ENCODE measurements at regions of chr11 and their contacts with region 1.

Region 1: GRCh38 chr11:121194731-121195596 is 93.9 kb downstream of the TECTA start:
- DNase-seq: peak; percentile 31
- ATAC-seq: peak; percentile 99
- H3K4me3 ChIP-seq: no peak overlapping the region
- H3K27ac ChIP-seq: no peak overlapping the region
- H3K4me1 ChIP-seq: no peaks in the 10 kb centered on the region
- H3K27me3 ChIP-seq: no peaks in the 10 kb centered on the region
- CTCF ChIP-seq: peak; percentile 72 to 84 (median 83)
- EP300 ChIP-seq: no peak
- POLR2A ChIP-seq: no peak
- RAD21 ChIP-seq: peak; percentile 86

Region 2: DNA sequence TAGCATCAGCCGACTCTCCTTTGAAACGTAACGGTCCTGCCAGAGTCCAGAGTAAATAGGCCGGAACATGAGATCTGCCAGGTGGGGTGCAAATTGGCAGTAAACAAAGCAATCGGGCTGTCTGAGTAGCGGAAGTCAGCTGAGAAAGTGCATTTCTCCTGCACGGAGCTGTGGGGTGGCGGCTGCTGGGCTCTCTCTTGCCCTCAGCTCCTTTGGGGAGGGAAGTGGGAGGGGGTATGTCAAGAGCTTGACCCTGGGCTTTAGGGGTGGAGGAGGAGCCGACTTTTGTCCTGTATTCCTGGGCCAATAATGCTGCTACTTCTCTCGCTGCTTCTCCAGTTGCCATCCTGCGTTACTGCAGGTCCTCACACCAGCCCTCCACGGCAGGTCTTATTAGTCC is 671.8 kb before region 1 on chr11:
- CTCF ChIA-PET with region 1: interaction called, 3 read pairs
- POLR2A ChIA-PET with region 1: no interaction called
- RAD21 ChIA-PET with region 1: no interaction called
- SMC1A ChIA-PET with region 1: no interaction called
- in situ Hi-C with region 1: loop called (anchors 5 kb)
- intact Hi-C with region 1: no loop called
- DNase-seq: no peak
- ATAC-seq: peak; percentile 51
- H3K4me3 ChIP-seq: no peak overlapping the region
- H3K27ac ChIP-seq: no peak overlapping the region
- H3K4me1 ChIP-seq: no peaks in the 10 kb centered on the region
- H3K27me3 ChIP-seq: peaks cover 0 to 1% of the 10 kb centered on the region in 2 experiments; a peak in 2 of 4 replicates
- CTCF ChIP-seq: no peak
- EP300 ChIP-seq: no peak
- POLR2A ChIP-seq: no peak
- RAD21 ChIP-seq: no peak

Region 3: DNA sequence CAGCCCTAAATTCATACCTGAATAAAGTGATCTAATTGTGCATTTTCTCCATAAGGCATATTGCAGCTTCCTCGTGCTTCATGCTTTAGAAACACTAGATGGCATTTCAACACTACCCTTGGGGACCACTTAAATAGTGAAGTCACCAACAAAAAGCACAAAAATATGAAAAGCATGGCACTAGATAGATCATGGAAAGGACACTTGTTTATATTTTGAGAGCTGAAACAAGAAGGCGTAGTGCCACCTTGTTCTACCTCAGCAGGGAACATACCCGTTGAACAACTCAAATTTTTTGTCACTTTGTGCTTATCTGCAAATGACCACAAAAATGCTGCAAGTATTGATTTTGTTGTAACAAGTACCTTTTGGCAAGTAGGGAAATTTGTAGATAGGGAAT is 162.4 kb before region 1 on chr11:
- CTCF ChIA-PET with region 1: interaction called, 9 read pairs
- POLR2A ChIA-PET with region 1: no interaction called
- RAD21 ChIA-PET with region 1: interaction called, 3 read pairs
- SMC1A ChIA-PET with region 1: interaction called, 6 read pairs
- in situ Hi-C with region 1: no loop called
- intact Hi-C with region 1: loop called (anchors 2 kb)
- DNase-seq: no peak
- ATAC-seq: 0 out of 3 replicates have a peak, but pooled peaks have one; percentile 17
- H3K4me3 ChIP-seq: no peak overlapping the region
- H3K27ac ChIP-seq: no peak overlapping the region
- H3K4me1 ChIP-seq: peaks cover 14% of the 10 kb centered on the region
- H3K27me3 ChIP-seq: no peaks in the 10 kb centered on the region
- CTCF ChIP-seq: peak in 2 of 3 experiments; percentile 27 to 39; a peak in 3 of 6 replicates
- EP300 ChIP-seq: no peak
- POLR2A ChIP-seq: no peak
- RAD21 ChIP-seq: peak; percentile 63

Region 4: GRCh38 chr11:121207485-121208115 is 12.6 kb after region 1 on chr11:
- CTCF ChIA-PET with region 1: interaction called, 13 read pairs
- POLR2A ChIA-PET with region 1: no interaction called
- RAD21 ChIA-PET with region 1: interaction called, 3 read pairs
- SMC1A ChIA-PET with region 1: interaction called, 3 read pairs
- in situ Hi-C with region 1: no loop called
- intact Hi-C with region 1: no loop called
- DNase-seq: peak; percentile 50
- ATAC-seq: peak; percentile 73
- H3K4me3 ChIP-seq: no peak overlapping the region
- H3K27ac ChIP-seq: no peak overlapping the region
- H3K4me1 ChIP-seq: peaks cover 4% of the 10 kb centered on the region
- H3K27me3 ChIP-seq: peaks cover 0 to 1% of the 10 kb centered on the region in 2 experiments; a peak in 1 of 4 replicates
- CTCF ChIP-seq: no peak
- EP300 ChIP-seq: no peak
- POLR2A ChIP-seq: no peak
- RAD21 ChIP-seq: no peak

Region 5: GRCh38 chr11:121236115-121237001 is 41.4 kb after region 1 on chr11:
- CTCF ChIA-PET with region 1: interaction called, 19 read pairs
- POLR2A ChIA-PET with region 1: no interaction called
- RAD21 ChIA-PET with region 1: interaction called, 4 read pairs
- SMC1A ChIA-PET with region 1: interaction called, 4 read pairs
- in situ Hi-C with region 1: no loop called
- intact Hi-C with region 1: no loop called
- DNase-seq: peak; percentile 74
- ATAC-seq: peak; percentile 85
- H3K4me3 ChIP-seq: peak overlapping the region; percentile 57
- H3K27ac ChIP-seq: peak overlapping the region; percentile 95
- H3K4me1 ChIP-seq: peaks cover 32% of the 10 kb centered on the region
- H3K27me3 ChIP-seq: no peaks in the 10 kb centered on the region
- CTCF ChIP-seq: no peak
- EP300 ChIP-seq: no peak; a peak in 1 of 4 replicates
- POLR2A ChIP-seq: no peak
- RAD21 ChIP-seq: no peak

Region 6: DNA sequence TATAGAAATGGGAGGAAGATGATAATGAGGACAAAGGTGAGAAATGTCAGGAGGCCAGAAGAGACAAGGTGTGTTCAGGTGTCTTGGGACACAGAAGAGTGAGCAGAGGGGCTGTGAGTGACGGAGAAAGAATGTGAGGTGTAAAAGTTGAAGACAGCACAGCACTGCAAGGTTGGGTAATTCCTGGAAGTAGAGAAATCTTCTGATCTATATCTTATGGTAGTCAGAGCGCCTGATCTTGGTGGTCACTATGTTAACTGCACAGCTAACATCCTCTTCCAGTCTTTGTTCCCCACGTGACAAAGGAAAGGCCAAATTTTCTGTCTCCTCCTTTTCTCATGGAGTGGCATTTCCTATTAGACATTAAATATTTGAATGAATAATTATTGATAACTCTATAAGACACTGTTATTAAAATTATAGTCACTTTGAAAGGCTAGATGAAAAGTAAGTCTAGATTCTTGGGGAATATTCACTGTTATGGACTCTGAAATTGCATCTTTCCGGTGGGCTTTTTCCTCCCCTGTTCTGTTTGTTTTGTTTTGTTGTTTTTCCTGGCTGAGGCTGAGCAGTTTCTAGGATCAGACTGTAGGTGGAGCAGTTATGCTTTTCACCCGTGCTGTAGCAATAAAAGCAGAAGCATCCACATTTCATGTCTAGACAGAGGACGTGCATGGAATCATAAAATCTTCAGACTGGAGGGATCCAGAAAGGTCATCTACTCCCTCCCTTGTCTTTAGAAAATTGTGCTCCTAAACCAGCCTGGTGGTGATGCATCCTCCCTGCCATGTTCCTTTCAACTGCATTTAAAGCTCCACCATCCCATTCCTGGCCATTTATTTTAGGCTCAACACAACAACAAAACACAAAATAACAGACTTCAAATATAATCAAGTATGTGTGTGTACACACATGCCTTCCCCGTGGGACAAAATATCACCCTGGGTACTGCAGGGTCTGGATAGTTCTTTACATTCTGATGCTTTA is 124.2 kb after region 1 on chr11:
- CTCF ChIA-PET with region 1: no interaction called
- POLR2A ChIA-PET with region 1: no interaction called
- RAD21 ChIA-PET with region 1: no interaction called
- SMC1A ChIA-PET with region 1: no interaction called
- in situ Hi-C with region 1: no loop called
- intact Hi-C with region 1: no loop called
- DNase-seq: no peak
- ATAC-seq: peak; percentile 84
- H3K4me3 ChIP-seq: no peak overlapping the region
- H3K27ac ChIP-seq: no peak overlapping the region
- H3K4me1 ChIP-seq: peaks cover 4% of the 10 kb centered on the region; the same call in 1 of the 2 replicates
- H3K27me3 ChIP-seq: no peaks in the 10 kb centered on the region
- CTCF ChIP-seq: peak; percentile 75 to 88 (median 86)
- EP300 ChIP-seq: no peak
- POLR2A ChIP-seq: no peak
- RAD21 ChIP-seq: peak; percentile 93

Measured in GM12878 (cell line).